GM12878 (cell line): ENCODE measurements at regions of chr2 and their contacts with region 1.

Region 1: DNA sequence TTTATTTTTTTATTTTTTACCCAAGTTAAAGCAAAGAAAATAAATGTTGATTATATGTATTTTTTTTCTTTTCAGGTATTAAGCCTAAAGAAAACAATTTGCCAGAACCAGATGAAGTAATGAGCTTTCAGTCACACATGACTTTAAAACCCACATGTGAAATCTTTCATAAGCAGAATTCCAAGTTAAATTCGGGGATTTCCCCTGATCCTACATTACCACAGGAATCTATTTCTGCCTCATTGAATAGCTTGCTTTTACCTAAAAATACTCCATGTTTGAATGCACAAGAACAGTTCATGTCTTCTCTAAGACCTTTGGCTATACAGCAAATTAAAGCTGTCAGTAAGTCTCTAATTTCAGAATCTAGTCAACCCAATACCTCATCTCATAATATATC is 26.6 kb downstream of the GEN1 start:
- DNase-seq: no peak
- ATAC-seq: no peak
- H3K4me3 ChIP-seq: no peak overlapping the region
- H3K27ac ChIP-seq: no peak overlapping the region
- H3K4me1 ChIP-seq: no peaks in the 10 kb centered on the region
- H3K27me3 ChIP-seq: no peaks in the 10 kb centered on the region
- CTCF ChIP-seq: no peak
- EP300 ChIP-seq: no peak
- POLR2A ChIP-seq: no peak
- RAD21 ChIP-seq: no peak

Region 2: GRCh38 chr2:17792515-17792914 is 12.0 kb after region 1 on chr2:
- CTCF ChIA-PET with region 1: interaction called, 5 read pairs
- POLR2A ChIA-PET with region 1: interaction called, 4 read pairs
- RAD21 ChIA-PET with region 1: no interaction called
- SMC1A ChIA-PET with region 1: interaction called, 21 read pairs
- in situ Hi-C with region 1: no loop called
- intact Hi-C with region 1: no loop called
- DNase-seq: no peak
- ATAC-seq: no peak; the same call in 2 of the 3 replicates
- H3K4me3 ChIP-seq: no peak overlapping the region
- H3K27ac ChIP-seq: no peak overlapping the region
- H3K4me1 ChIP-seq: no peaks in the 10 kb centered on the region
- H3K27me3 ChIP-seq: no peaks in the 10 kb centered on the region
- CTCF ChIP-seq: no peak
- EP300 ChIP-seq: no peak
- POLR2A ChIP-seq: no peak
- RAD21 ChIP-seq: no peak